AG04450 (cell line): ENCODE measurements at regions of chr11 and their contacts with region 1.

Region 1: DNA sequence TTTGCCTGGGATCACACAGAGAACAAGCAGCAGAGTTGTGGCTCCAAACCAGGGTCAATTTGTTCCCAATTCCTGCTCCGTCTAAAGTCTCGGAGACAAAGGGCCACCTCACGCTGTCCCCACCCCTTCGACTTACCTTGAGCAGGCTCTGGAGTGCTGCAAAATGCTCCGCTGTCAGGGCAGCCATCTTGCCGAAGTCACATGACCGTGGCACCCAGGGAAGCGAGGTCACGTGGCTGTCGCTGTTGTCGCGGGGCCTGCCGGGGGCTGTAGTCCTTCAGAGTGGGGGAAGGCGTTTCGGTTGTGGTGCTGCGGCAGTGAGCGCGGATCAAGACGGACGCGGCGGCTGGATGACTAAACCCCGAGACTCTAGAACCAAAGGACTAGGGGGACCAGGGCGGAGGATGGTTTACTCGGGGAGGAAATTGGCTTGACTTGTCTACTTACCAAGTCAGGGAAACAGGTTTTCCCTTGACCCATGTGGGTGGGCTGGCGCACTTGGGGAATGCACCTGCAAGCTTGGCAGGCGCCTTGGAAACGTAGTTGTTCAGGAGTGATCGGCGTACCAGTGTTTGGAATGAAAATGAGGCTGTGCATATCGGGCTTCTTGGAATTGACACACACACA is at the start of gene COMMD9:
- DNase-seq: peak; percentile 79
- H3K4me3 ChIP-seq: peak within 1 kb of the TSS; percentile 98
- H3K27ac ChIP-seq: no peak within 1 kb of the TSS
- H3K27me3 ChIP-seq: no peaks in the 10 kb centered on the region
- CTCF ChIP-seq: no peak
- polyA plus RNA-seq, gene COMMD9: 51.5 and 73.0 TPM in 2 replicates

Region 2: GRCh38 chr11:36469063-36469462 is 179.7 kb after region 1 on chr11:
- CTCF ChIA-PET with region 1: interaction called, 14 read pairs
- POLR2A ChIA-PET with region 1: no interaction called
- DNase-seq: no peak
- H3K4me3 ChIP-seq: no peak overlapping the region
- H3K27ac ChIP-seq: no peak overlapping the region
- H3K27me3 ChIP-seq: no peaks in the 10 kb centered on the region
- CTCF ChIP-seq: peak; percentile 45; the same call in 1 of the 2 replicates

Region 3: GRCh38 chr11:36500315-36500721 is 211.0 kb after region 1 on chr11:
- CTCF ChIA-PET with region 1: interaction called, 17 read pairs
- POLR2A ChIA-PET with region 1: no interaction called
- DNase-seq: peak; percentile 77
- H3K4me3 ChIP-seq: no peak overlapping the region
- H3K27ac ChIP-seq: peak overlapping the region; percentile 57
- H3K27me3 ChIP-seq: no peaks in the 10 kb centered on the region
- CTCF ChIP-seq: no peak